ENCODE measurements at regions of chr22 and their contacts with region 1.

Region 1: GRCh38 chr22:50185384-50186087 is at the start of gene TRABD:
- DNase-seq: peak; percentile 92
- ATAC-seq: peak; percentile 60
- H3K4me3 ChIP-seq: peak within 1 kb of the TSS; percentile 52 to 76 (median 61)
- H3K4me3 Mint-ChIP-seq: peak within 1 kb of the TSS; percentile 90
- H3K27ac ChIP-seq: peak within 1 kb of the TSS; percentile 38 to 71
- H3K27ac Mint-ChIP-seq: peak within 1 kb of the TSS; percentile 86
- H3K4me1 ChIP-seq: peaks cover 50 to 54% of the 10 kb centered on the region in 2 donors
- H3K4me1 Mint-ChIP-seq: peaks cover 36% of the 10 kb centered on the region
- H3K27me3 ChIP-seq: peaks cover 0 to 17% (median 2%) of the 10 kb centered on the region in 4 experiments
- H3K27me3 Mint-ChIP-seq: no peaks in the 10 kb centered on the region
- CTCF ChIP-seq: no peak
- total RNA-seq, gene TRABD: 200 and 205 TPM in 2 replicates

Region 2: DNA sequence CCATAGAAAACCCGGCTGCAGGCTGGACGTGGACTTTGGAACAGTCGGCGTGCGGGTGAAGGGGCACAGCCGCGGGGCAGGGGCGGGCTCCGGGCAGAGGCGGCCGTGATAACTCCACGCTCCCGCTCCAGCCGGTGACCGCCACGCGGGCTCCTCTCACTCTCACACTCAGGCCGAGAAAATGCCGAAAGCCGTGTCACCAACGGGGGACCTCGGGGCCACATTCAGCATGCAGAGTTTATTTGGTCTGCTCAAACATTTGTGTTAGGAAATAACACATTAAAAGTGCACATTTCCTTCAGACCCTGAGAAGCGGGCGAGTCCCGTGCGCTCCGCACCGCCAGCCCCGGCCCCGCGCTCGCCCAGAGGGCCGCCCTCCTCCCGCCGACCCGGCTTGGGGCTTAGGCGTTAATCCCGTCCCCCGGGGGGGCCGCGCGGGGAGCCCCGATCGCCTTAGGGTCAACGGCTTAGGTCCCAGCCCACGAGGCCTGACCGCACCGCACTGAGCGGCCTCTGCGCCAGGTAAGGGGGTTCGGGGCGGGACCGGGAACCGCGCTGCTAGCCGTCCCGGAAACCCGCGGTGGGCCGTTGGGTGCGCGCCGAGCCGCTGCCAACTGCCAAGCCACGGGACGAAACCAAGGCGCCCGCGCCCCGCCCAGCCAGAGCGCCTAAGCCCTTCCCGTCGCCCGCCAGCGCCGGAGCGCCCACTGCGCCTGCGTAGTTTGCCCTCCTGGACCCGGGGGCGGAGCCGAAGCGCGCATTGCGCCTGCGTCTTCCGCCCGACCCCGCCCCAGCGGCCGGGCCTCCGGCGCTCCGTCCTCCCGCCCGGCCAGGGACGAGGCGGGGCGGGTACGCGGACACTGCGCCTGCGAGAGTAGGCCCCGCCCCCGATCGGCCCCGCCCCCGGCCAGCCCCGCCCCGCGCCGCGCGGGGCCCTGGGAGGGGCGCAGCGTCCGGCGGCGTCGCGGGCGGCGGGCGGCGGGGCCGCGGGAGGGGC is 332.3 kb before region 1 on chr22 and contains the start of gene ZBED4:
- CTCF ChIA-PET with region 1: no interaction called
- POLR2A ChIA-PET with region 1: no interaction called
- intact Hi-C with region 1: loop called (anchors 5 kb)
- DNase-seq: peak; percentile 99
- ATAC-seq: peak; percentile 88
- H3K4me3 ChIP-seq: peak within 1 kb of the TSS; percentile 66 to 81 (median 77)
- H3K4me3 Mint-ChIP-seq: peak within 1 kb of the TSS; percentile 87
- H3K27ac ChIP-seq: peak within 1 kb of the TSS; percentile 73 to 90
- H3K27ac Mint-ChIP-seq: peak within 1 kb of the TSS; percentile 93
- H3K4me1 ChIP-seq: peaks cover 31 to 44% of the 10 kb centered on the region in 2 donors
- H3K4me1 Mint-ChIP-seq: peaks cover 43% of the 10 kb centered on the region
- H3K27me3 ChIP-seq: peaks cover 0 to 25% (median 14%) of the 10 kb centered on the region in 4 experiments
- H3K27me3 Mint-ChIP-seq: peaks cover 16% of the 10 kb centered on the region
- CTCF ChIP-seq: no peak
- total RNA-seq, gene ZBED4: 14.6 and 14.7 TPM in 2 replicates

Region 3: GRCh38 chr22:49936018-49936952 is 249.3 kb before region 1 on chr22:
- CTCF ChIA-PET with region 1: interaction called, 12 read pairs
- POLR2A ChIA-PET with region 1: interaction called, 19 read pairs
- intact Hi-C with region 1: loop called (anchors 2 kb)
- DNase-seq: peak; percentile 98
- ATAC-seq: peak; percentile 73
- H3K4me3 ChIP-seq: peak overlapping the region in 4 of 5 experiments; percentile 41 to 56 (median 50)
- H3K4me3 Mint-ChIP-seq: peak overlapping the region; percentile 66
- H3K27ac ChIP-seq: peak overlapping the region; percentile 91 to 92
- H3K27ac Mint-ChIP-seq: peak overlapping the region; percentile 82
- H3K4me1 ChIP-seq: peaks cover 41 to 53% of the 10 kb centered on the region in 2 donors
- H3K4me1 Mint-ChIP-seq: peaks cover 27% of the 10 kb centered on the region
- H3K27me3 ChIP-seq: no peaks in the 10 kb centered on the region
- H3K27me3 Mint-ChIP-seq: no peaks in the 10 kb centered on the region
- CTCF ChIP-seq: no peak

Region 4: GRCh38 chr22:50148991-50149721 is 36.4 kb before region 1 on chr22:
- CTCF ChIA-PET with region 1: interaction called, 29 read pairs
- POLR2A ChIA-PET with region 1: interaction called, 7 read pairs
- intact Hi-C with region 1: loop called (anchors 1 kb)
- DNase-seq: peak; percentile 90
- ATAC-seq: peak; percentile 99
- H3K4me3 ChIP-seq: no peak overlapping the region
- H3K4me3 Mint-ChIP-seq: no peak overlapping the region
- H3K27ac ChIP-seq: no peak overlapping the region
- H3K27ac Mint-ChIP-seq: peak overlapping the region; percentile 72
- H3K4me1 ChIP-seq: peaks cover 3 to 8% of the 10 kb centered on the region in 2 donors
- H3K4me1 Mint-ChIP-seq: peaks cover 7% of the 10 kb centered on the region
- H3K27me3 ChIP-seq: peaks cover 0 to 3% (median 0%) of the 10 kb centered on the region in 4 experiments
- H3K27me3 Mint-ChIP-seq: peaks cover 4% of the 10 kb centered on the region
- CTCF ChIP-seq: peak; percentile 94

Region 5: DNA sequence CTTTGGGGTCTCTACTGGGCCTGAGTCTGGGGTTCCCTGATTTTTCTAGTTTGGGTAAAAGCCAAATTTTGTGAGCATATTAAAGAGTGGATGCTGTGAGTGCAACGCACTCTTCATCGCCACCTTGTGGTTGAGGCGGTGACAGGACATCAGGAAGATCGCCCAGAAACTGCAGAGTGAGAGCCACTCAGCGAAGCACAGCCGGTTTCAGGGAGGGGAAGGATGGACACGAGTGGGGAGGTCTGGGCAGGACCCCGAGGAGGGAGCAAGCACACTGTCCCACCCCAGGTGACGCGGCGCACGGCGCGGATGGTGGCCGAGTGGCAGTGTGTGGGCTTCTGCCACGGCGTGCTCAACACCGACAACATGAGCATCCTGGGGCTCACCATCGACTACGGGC is 24.4 kb after region 1 on chr22:
- CTCF ChIA-PET with region 1: interaction called, 41 read pairs
- POLR2A ChIA-PET with region 1: interaction called, 43 read pairs
- intact Hi-C with region 1: no loop called
- DNase-seq: peak; percentile 85
- ATAC-seq: peak; percentile 26
- H3K4me3 ChIP-seq: no peak overlapping the region
- H3K4me3 Mint-ChIP-seq: no peak overlapping the region
- H3K27ac ChIP-seq: no peak overlapping the region
- H3K27ac Mint-ChIP-seq: peak overlapping the region; percentile 27
- H3K4me1 ChIP-seq: peaks cover 15 to 26% of the 10 kb centered on the region in 2 donors
- H3K4me1 Mint-ChIP-seq: peaks cover 34% of the 10 kb centered on the region
- H3K27me3 ChIP-seq: no peaks in the 10 kb centered on the region
- H3K27me3 Mint-ChIP-seq: no peaks in the 10 kb centered on the region
- CTCF ChIP-seq: peak; percentile 85

Region 6: GRCh38 chr22:50260801-50261614 is 75.5 kb after region 1 on chr22:
- CTCF ChIA-PET with region 1: no interaction called
- POLR2A ChIA-PET with region 1: no interaction called
- intact Hi-C with region 1: no loop called
- DNase-seq: no peak
- ATAC-seq: peak; percentile 28
- H3K4me3 ChIP-seq: peak overlapping the region in 3 of 5 experiments; percentile 5 to 36 (median 33)
- H3K4me3 Mint-ChIP-seq: peak overlapping the region; percentile 45
- H3K27ac ChIP-seq: no peak overlapping the region
- H3K27ac Mint-ChIP-seq: no peak overlapping the region
- H3K4me1 ChIP-seq: peaks cover 17 to 21% of the 10 kb centered on the region in 2 donors
- H3K4me1 Mint-ChIP-seq: peaks cover 13% of the 10 kb centered on the region
- H3K27me3 ChIP-seq: peaks cover 0 to 31% (median 8%) of the 10 kb centered on the region in 4 experiments
- H3K27me3 Mint-ChIP-seq: peaks cover 10% of the 10 kb centered on the region
- CTCF ChIP-seq: no peak

Region 7: DNA sequence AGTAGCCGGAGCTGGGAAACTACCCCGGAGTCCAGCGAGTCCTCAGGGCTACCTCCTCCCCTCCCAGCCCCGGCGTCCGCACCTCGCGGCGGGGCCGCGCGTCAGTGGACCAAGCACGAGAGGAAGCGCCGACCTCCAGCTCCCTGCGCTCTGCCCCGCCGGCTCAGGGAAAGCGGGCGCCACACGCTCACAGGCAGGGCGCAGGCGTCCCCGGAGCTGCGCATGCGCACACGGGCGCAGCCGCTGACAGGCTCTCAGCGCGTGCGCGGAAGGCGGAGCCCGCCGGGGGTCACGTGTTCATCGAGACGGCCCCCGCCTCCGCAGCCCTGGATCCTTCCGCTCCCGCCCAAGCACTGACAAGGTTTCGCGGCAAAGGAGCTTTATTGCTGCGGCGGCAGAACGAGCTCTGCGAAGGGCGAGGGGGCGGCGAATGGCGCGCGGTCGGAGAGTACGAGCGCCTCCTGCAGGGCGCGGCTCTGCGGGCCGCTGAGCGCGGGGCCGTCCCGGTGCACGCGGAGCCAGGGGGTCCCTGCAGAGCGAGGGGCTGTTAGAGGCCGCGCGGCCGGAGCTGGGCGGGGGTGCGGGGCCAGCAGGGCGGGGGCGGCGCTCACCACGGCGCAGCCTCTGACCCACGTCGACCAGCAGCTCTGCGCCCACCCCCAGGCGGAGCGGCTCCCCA is 340.0 kb after region 1 on chr22 and contains the start of gene SCO2:
- CTCF ChIA-PET with region 1: interaction called, 10 read pairs
- POLR2A ChIA-PET with region 1: interaction called, 5 read pairs
- intact Hi-C with region 1: no loop called
- DNase-seq: peak; percentile 98
- ATAC-seq: peak; percentile 54
- H3K4me3 ChIP-seq: peak within 1 kb of the TSS; percentile 4 to 82 (median 69)
- H3K4me3 Mint-ChIP-seq: peak within 1 kb of the TSS; percentile 90
- H3K27ac ChIP-seq: peak within 1 kb of the TSS; percentile 83 to 90
- H3K27ac Mint-ChIP-seq: peak within 1 kb of the TSS; percentile 91
- H3K4me1 ChIP-seq: peaks cover 16 to 52% of the 10 kb centered on the region in 2 donors
- H3K4me1 Mint-ChIP-seq: peaks cover 34% of the 10 kb centered on the region
- H3K27me3 ChIP-seq: no peaks in the 10 kb centered on the region
- H3K27me3 Mint-ChIP-seq: no peaks in the 10 kb centered on the region
- CTCF ChIP-seq: no peak
- total RNA-seq, gene SCO2: 1.1 TPM in 2 replicates

Measured in B cell (primary cell).